HepG2 (cell line): ENCODE measurements at regions of chr4 and their contacts with region 1.

Region 1: GRCh38 chr4:128809477-128810330 is at the start of gene JADE1:
- DNase-seq: peak; percentile 91
- ATAC-seq: peak; percentile 73
- H3K4me3 ChIP-seq: peak within 1 kb of the TSS; percentile 82 to 99 (median 84)
- H3K27ac ChIP-seq: peak within 1 kb of the TSS; percentile 99
- H3K4me1 ChIP-seq: peaks cover 18% of the 10 kb centered on the region
- H3K27me3 ChIP-seq: no peaks in the 10 kb centered on the region; a peak in 1 of 5 replicates
- CTCF ChIP-seq: peak; percentile 92
- EP300 ChIP-seq: 0 out of 4 replicates have a peak, but pooled peaks of 1 of the 2 experiments have one; percentile 21
- POLR2A ChIP-seq: peak; percentile 45 to 52; a peak in 2 of 4 replicates
- RAD21 ChIP-seq: peak; percentile 87
- total RNA-seq, gene JADE1: 19.3 and 23.4 TPM in 2 replicates

Region 2: GRCh38 chr4:128454281-128455075 is 355.2 kb before region 1 on chr4:
- CTCF ChIA-PET with region 1: interaction called, 5 read pairs
- POLR2A ChIA-PET with region 1: no interaction called
- in situ Hi-C with region 1: no loop called
- intact Hi-C with region 1: loop called (anchors 2 kb)
- DNase-seq: peak; percentile 67
- ATAC-seq: peak; percentile 99
- H3K4me3 ChIP-seq: no peak overlapping the region
- H3K27ac ChIP-seq: no peak overlapping the region
- H3K4me1 ChIP-seq: no peaks in the 10 kb centered on the region
- H3K27me3 ChIP-seq: no peaks in the 10 kb centered on the region
- CTCF ChIP-seq: peak; percentile 82
- EP300 ChIP-seq: no peak
- POLR2A ChIP-seq: no peak
- RAD21 ChIP-seq: peak; percentile 66

Region 3: DNA sequence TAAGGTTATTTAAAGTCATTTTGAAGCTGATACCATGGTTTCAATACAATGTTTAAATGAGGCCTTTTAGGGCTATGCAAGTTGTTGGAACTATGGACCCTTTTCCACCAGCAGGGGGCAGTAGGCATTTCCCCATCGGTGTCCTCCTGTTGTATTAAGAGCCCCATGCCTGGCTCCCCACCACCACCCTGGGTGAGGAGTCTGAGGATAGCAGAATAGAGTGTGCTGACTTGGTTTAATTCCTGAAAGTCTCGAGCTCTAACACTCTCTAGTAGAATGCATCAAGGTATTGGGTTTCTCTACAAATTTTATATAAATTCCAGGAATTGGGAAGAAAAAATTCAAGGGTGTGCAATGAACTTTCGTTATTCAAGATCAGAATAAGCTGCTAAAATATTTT is 235.0 kb before region 1 on chr4:
- CTCF ChIA-PET with region 1: interaction called, 5 read pairs
- POLR2A ChIA-PET with region 1: no interaction called
- in situ Hi-C with region 1: loop called (anchors 25 kb)
- intact Hi-C with region 1: no loop called
- DNase-seq: peak; percentile 32
- ATAC-seq: peak; percentile 86
- H3K4me3 ChIP-seq: no peak overlapping the region
- H3K27ac ChIP-seq: no peak overlapping the region
- H3K4me1 ChIP-seq: peaks cover 21% of the 10 kb centered on the region
- H3K27me3 ChIP-seq: no peaks in the 10 kb centered on the region; a peak in 1 of 5 replicates
- CTCF ChIP-seq: peak; percentile 65
- EP300 ChIP-seq: no peak
- POLR2A ChIP-seq: no peak
- RAD21 ChIP-seq: peak; percentile 32; the same call in 1 of the 2 replicates

Region 4: GRCh38 chr4:128782076-128782715 is 27.5 kb before region 1 on chr4:
- CTCF ChIA-PET with region 1: no interaction called
- POLR2A ChIA-PET with region 1: no interaction called
- in situ Hi-C with region 1: no loop called
- intact Hi-C with region 1: loop called (anchors 1 kb)
- DNase-seq: peak; percentile 28
- ATAC-seq: peak; percentile 91
- H3K4me3 ChIP-seq: no peak overlapping the region
- H3K27ac ChIP-seq: no peak overlapping the region
- H3K4me1 ChIP-seq: no peaks in the 10 kb centered on the region
- H3K27me3 ChIP-seq: no peaks in the 10 kb centered on the region
- CTCF ChIP-seq: peak; percentile 65
- EP300 ChIP-seq: no peak
- POLR2A ChIP-seq: no peak
- RAD21 ChIP-seq: 0 out of 2 replicates have a peak, but pooled peaks have one; percentile 16

Region 5: GRCh38 chr4:128837679-128838078 is 28.0 kb after region 1 on chr4:
- CTCF ChIA-PET with region 1: no interaction called
- POLR2A ChIA-PET with region 1: interaction called, 10 read pairs
- in situ Hi-C with region 1: no loop called
- intact Hi-C with region 1: loop called (anchors 1 kb)
- DNase-seq: no peak
- ATAC-seq: no peak
- H3K4me3 ChIP-seq: no peak overlapping the region
- H3K27ac ChIP-seq: peak overlapping the region; percentile 52
- H3K4me1 ChIP-seq: peaks cover 29% of the 10 kb centered on the region
- H3K27me3 ChIP-seq: no peaks in the 10 kb centered on the region
- CTCF ChIP-seq: no peak
- EP300 ChIP-seq: no peak
- POLR2A ChIP-seq: no peak
- RAD21 ChIP-seq: no peak